Activated T-helper 2 cell treated with anti-CD3 and anti-CD28 coated beads, Interferon-gamma antibody, Interleukin-2, Interleukin-4, amounts not matched to agents 10 μg/mL and 5 μg/mL and 100 μg/mL, durations not matched to agents 14 hours and 24 hours and 36 hours (primary cell): ENCODE measurements at regions of chr6 and their contacts with region 1.

Region 1: DNA sequence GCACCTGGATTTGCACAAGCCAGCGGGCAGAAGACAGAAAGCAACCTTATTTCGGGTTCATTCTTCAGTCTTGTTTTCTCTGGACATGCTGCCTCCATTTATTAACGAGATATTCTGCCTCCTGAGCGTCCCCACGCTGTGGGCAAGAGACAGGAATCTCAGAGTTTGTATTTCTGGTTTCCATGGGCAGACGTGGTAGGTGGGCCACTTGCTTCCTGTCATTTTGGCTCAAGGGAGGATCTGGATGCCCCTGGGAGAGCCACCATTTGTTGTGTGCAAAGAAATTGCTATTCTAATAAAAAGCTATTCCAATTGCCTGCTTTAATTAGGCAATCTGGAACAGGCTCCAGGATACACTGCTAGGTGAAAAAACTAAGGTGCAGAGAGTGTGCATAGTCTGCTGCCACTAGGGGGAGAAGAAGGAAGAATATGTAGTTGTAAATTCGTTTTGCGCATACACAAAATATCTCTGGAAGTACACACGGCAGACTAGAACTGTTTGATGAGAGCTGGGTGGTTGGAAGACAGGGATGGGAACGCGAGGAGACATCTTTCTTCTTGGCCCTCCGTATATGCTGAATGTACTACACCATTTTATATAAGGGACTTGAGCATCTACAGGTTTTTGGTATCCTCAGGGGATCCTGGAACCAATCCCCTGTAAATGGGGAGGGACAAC is 30.1 kb upstream of the SLC16A10 start:
- DNase-seq: no peak
- H3K4me3 Mint-ChIP-seq: no peak overlapping the region
- H3K27ac Mint-ChIP-seq: no peak overlapping the region
- H3K4me1 Mint-ChIP-seq: peaks cover 4% of the 10 kb centered on the region
- H3K27me3 Mint-ChIP-seq: peaks cover 5% of the 10 kb centered on the region

Region 2: DNA sequence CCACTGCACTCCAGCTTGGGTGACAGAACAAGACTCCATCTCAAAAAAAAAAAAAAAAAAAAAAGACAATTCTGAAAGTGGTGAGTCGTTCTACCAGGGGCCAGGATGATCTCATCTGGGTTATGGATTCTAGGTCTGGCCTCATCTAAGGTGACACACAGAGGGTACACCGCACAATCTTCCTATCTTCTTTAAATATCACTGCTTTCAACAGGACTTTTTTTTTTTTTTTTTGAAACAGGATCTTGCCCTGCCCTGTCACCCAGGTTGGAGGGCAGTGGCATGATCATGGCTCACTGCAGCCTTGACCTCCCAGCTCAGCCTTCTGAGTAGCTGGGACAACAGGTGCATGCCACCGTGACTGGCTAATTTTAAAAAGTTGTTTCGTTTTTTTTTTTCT is 97.8 kb after region 1 on chr6:
- intact Hi-C with region 1: loop called (anchors 5 kb)
- DNase-seq: no peak
- H3K4me3 Mint-ChIP-seq: no peak overlapping the region
- H3K27ac Mint-ChIP-seq: no peak overlapping the region
- H3K4me1 Mint-ChIP-seq: peaks cover 10% of the 10 kb centered on the region
- H3K27me3 Mint-ChIP-seq: peaks cover 23% of the 10 kb centered on the region

Region 3: GRCh38 chr6:111210194-111210728 is 153.0 kb after region 1 on chr6:
- intact Hi-C with region 1: loop called (anchors 1 kb)
- DNase-seq: no peak
- H3K4me3 Mint-ChIP-seq: no peak overlapping the region
- H3K27ac Mint-ChIP-seq: no peak overlapping the region
- H3K4me1 Mint-ChIP-seq: no peaks in the 10 kb centered on the region
- H3K27me3 Mint-ChIP-seq: no peaks in the 10 kb centered on the region